ENCODE measurements at regions of chr22 and their contacts with region 1.

Region 1: GRCh38 chr22:41285820-41286638 is at the start of gene RANGAP1:
- DNase-seq: peak; percentile 99
- ATAC-seq: peak; percentile 100
- total RNA-seq, gene RANGAP1: 51.5 TPM

Region 2: GRCh38 chr22:40950962-40951794 is 334.9 kb before region 1 on chr22 and contains the start of gene RBX1:
- intact Hi-C with region 1: loop called (anchors 10 kb)
- DNase-seq: peak; percentile 99
- ATAC-seq: peak; percentile 97
- total RNA-seq, gene RBX1: 74.1 TPM

Region 3: DNA sequence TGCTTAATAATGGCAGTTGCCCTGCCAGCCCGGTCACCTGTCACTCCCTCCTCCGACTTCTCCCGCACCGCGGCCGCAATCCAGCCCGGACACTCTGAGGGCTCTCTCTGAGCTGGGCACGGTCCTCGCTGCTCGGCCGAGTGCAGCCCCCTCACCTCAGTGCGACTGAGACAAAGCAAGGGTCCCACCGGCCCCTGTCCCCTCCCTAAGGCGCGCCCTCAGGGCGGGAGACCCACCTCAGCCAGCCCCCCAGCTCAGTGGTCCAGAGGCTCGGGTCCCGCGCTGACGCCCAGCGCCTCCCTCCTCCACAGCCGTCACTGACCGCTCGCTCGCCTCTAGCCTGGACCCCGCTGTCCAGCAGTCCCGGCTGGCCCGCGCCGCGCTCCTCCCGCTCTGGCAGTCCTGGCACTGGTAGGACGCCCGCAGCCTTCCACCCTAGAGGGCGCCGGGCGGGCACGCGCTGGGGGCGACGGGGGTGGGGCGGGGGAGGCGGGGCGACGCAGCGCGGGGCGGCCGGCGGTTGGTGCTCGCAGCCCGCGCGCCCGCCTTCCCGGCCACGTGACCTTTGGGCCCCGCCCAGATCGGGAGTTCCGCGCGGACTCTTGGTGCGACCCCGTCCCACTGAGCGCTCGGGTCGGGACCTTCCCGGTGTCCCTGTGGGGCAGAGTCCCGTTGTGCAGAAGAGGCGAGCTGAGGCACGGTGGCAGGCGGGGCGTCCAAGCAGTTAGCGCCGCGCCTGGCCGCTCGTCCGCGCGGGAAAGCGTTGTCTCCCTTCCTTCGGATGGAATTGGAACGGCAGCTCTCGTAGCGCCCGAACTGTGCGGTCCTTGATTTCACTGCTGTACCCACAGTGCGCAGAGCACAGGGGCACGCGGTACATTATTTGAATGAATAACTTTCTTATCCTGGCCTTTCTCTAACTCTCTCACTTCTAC is 88.7 kb before region 1 on chr22:
- intact Hi-C with region 1: loop called (anchors 5 kb)
- DNase-seq: peak; percentile 92
- ATAC-seq: peak; percentile 95

Region 4: GRCh38 chr22:41327124-41327523 is 41.1 kb after region 1 on chr22:
- intact Hi-C with region 1: no loop called
- DNase-seq: no peak
- ATAC-seq: no peak

Region 5: DNA sequence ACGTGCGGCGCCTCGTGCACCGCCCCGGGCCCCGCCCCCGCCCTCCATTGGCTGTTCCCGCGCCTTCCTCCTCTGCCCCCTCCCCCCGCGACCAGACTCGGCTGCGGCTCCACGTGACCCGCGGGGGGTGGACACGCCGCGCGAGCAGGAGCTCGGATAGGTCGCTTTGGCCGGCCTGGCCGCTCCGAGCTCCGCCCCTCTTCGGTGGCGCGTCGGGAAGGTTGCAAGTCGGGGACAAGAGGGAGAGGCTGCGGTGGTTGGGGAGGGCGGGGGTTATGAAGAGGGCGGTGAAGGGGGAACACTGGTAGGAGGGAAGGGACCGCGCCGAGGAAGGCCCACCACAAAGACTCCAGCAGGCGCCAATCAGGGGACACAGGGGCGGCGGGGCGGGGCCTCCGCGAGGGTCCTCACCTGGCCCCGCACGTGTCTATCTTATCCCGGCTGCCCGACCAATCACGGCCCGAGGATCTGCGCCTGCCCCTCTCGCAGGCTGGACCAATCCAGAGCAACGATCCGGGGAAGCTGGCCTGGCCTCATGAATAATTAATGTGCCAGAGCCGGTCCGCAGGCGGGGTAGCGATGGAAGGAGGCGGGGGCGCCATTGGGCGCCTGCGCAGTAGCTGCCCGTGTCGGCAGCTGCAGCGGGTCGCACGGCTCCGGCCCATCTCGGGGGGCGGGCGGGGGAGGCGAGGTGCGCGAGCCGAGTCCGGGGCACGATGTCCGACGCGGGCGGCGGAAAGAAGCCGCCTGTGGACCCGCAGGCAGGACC is 95.5 kb after region 1 on chr22 and contains the start of gene TEF:
- intact Hi-C with region 1: loop called (anchors 5 kb)
- DNase-seq: peak; percentile 99
- ATAC-seq: peak; percentile 87
- total RNA-seq, gene TEF: 23.5 TPM

Measured in Right ventricle myocardium inferior (tissue), 1 donor.